ENCODE measurements at regions of chr9 and their contacts with region 1.

Region 1: DNA sequence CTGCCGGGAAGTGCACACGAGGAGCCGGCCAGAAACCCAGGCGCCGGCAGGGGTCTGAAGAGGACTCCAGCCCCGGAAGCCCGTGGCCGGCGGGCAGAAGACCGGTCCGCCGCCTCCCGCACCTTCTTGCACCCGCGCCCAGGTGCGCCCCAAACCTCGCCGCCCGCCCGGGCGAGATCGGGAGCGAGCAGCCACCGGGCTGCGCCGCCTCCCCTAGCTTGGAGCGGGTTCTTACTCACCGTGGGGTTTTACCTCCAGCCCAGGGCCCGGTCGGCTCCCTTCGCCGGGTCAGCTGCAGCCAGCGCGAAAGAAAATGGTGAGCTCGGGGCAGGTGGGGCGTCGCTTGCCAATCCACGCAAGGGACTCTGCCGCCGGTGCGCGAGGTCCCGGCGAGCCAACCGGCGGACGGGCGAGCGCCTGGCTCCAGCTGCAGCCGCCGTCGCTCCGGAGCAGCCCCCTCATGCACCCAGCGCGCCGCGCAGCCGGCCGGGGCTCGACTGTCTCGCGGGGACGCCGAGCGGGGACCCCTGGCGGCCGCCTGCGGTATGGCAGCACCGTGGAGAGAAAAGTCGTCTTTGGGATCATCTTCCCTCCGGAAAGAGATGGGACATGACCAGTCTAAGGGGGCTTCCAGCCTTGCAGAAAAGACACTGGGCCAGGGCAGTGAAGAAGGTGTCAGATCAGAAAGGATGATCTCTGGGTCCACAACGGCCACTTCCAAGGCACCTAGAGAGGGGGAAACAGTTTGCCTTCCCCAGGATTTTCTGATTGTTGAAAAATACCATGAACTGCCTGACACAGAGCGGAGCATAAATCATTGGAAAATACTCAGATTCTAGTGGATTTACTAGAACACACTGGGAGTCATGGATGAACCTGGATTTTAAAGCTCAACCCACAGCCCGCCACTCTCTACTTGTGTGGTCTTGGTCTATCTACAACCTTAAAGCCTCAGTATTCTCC is at the start of gene MOB3B:
- DNase-seq: peak; percentile 88
- ATAC-seq: peak; percentile 81
- H3K4me3 Mint-ChIP-seq: peak within 1 kb of the TSS; percentile 82
- H3K27ac Mint-ChIP-seq: peak within 1 kb of the TSS; percentile 72
- H3K4me1 Mint-ChIP-seq: peaks cover 9% of the 10 kb centered on the region
- H3K27me3 Mint-ChIP-seq: peaks cover 15% of the 10 kb centered on the region
- total RNA-seq, gene MOB3B: 0.80 to 0.88 TPM

Region 2: GRCh38 chr9:27033823-27034403 is 495.7 kb before region 1 on chr9:
- CTCF ChIA-PET with region 1: no interaction called
- POLR2A ChIA-PET with region 1: no interaction called
- intact Hi-C with region 1: loop called in 1 of 2 experiments (anchors 10 kb)
- DNase-seq: peak; percentile 72
- ATAC-seq: peak; percentile 55
- H3K4me3 Mint-ChIP-seq: no peak overlapping the region
- H3K27ac Mint-ChIP-seq: no peak overlapping the region
- H3K4me1 Mint-ChIP-seq: no peaks in the 10 kb centered on the region
- H3K27me3 Mint-ChIP-seq: no peaks in the 10 kb centered on the region

Region 3: GRCh38 chr9:27365707-27366376 is 163.8 kb before region 1 on chr9:
- CTCF ChIA-PET with region 1: interaction called, 5 read pairs
- POLR2A ChIA-PET with region 1: no interaction called
- intact Hi-C with region 1: loop called (anchors 1 to 2 kb)
- DNase-seq: peak; percentile 82
- ATAC-seq: peak; percentile 99
- H3K4me3 Mint-ChIP-seq: peak overlapping the region; percentile 30
- H3K27ac Mint-ChIP-seq: peak overlapping the region; percentile 58
- H3K4me1 Mint-ChIP-seq: peaks cover 35% of the 10 kb centered on the region
- H3K27me3 Mint-ChIP-seq: peaks cover 15% of the 10 kb centered on the region

Region 4: GRCh38 chr9:27427273-27427645 is 102.3 kb before region 1 on chr9:
- CTCF ChIA-PET with region 1: no interaction called
- POLR2A ChIA-PET with region 1: no interaction called
- intact Hi-C with region 1: no loop called
- DNase-seq: no peak
- ATAC-seq: no peak
- H3K4me3 Mint-ChIP-seq: no peak overlapping the region
- H3K27ac Mint-ChIP-seq: no peak overlapping the region
- H3K4me1 Mint-ChIP-seq: peaks cover 5% of the 10 kb centered on the region
- H3K27me3 Mint-ChIP-seq: no peaks in the 10 kb centered on the region

Region 5: GRCh38 chr9:27447031-27447683 is 82.4 kb before region 1 on chr9:
- CTCF ChIA-PET with region 1: no interaction called
- POLR2A ChIA-PET with region 1: no interaction called
- intact Hi-C with region 1: no loop called
- DNase-seq: no peak
- ATAC-seq: no peak
- H3K4me3 Mint-ChIP-seq: no peak overlapping the region
- H3K27ac Mint-ChIP-seq: no peak overlapping the region
- H3K4me1 Mint-ChIP-seq: peaks cover 4% of the 10 kb centered on the region
- H3K27me3 Mint-ChIP-seq: no peaks in the 10 kb centered on the region

Region 6: DNA sequence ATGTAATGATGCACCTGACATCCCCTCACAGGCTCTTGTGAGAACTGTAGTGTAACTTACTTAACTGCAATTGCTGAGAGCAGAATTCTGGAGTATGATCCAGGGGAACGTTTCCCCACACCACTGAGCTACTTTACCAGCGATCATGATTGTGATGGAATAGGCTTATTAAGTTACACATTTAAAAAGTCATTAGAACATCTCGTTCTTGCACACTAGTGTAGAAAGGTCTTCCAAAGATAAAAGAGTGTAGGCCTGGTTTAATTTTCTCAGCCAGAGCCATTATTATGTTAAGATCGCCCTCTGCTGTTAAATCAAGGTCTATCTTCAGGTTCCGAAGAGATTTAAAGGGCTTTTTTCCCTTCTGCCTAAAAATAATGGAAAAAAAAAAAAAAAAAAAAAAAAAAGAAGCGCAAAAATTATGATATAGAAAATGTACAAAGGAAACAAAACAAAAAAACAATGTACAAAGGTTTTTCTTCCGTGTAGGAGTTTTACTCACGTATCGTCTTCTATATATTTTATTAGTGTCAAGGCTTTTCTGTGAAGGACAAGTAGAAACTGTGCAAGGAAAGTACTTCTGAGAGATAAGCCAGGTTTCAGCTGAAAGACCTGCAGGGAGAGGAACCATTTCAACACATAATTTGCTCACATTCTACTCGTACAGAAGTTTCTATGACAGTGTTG is 18.6 kb after region 1 on chr9:
- CTCF ChIA-PET with region 1: interaction called, 5 read pairs
- POLR2A ChIA-PET with region 1: no interaction called
- intact Hi-C with region 1: loop called in 1 of 2 experiments (anchors 1 kb)
- DNase-seq: no peak
- ATAC-seq: no peak
- H3K4me3 Mint-ChIP-seq: no peak overlapping the region
- H3K27ac Mint-ChIP-seq: no peak overlapping the region
- H3K4me1 Mint-ChIP-seq: no peaks in the 10 kb centered on the region
- H3K27me3 Mint-ChIP-seq: no peaks in the 10 kb centered on the region

Region 7: GRCh38 chr9:27600256-27600655 is 70.7 kb after region 1 on chr9:
- CTCF ChIA-PET with region 1: no interaction called
- POLR2A ChIA-PET with region 1: no interaction called
- intact Hi-C with region 1: loop called in 1 of 2 experiments (anchors 10 kb)
- DNase-seq: no peak
- ATAC-seq: no peak
- H3K4me3 Mint-ChIP-seq: no peak overlapping the region
- H3K27ac Mint-ChIP-seq: no peak overlapping the region
- H3K4me1 Mint-ChIP-seq: no peaks in the 10 kb centered on the region
- H3K27me3 Mint-ChIP-seq: peaks cover 3% of the 10 kb centered on the region